ENCODE measurements at regions of chr2 and their contacts with region 1.

Region 1: DNA sequence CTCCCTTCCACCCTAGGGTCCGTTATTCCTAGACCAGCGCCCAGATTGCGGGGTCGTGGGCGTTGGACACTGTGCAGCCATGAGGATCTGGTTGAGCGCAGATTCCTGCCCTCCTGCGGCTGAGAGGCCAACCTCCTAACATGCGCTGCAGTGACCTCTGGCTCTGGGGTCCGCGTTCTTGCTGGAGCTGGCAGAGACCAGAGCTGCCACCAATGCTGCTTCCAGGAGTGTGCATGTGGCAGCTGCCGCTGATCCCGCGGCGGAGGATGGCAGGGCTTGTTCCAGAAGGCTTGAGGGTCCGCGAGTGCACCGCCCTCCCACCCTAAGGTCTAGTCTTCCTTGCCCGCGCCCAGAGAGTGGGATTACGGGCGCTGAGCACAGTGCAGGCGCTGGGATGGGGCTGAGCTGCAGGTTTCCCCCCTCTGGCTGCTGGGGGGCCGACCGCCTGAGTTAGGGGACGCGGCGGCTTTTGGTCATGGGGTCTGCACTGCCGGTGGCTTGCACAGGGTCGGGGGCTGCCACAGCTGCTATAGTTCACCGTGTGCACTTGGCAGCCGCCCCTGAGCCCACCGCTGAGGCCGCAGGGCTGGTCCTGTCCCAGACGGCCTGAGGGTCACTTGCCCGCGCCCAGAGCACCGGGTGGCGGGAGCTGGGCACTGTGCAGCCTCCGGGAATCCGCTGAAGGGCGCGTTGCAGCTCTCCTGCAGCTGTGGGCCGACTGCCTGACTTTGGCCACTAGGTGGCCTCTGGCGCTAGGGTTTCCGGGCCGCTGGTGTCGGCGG is 145.9 kb downstream of the CCDC74A start:
- DNase-seq: peak; percentile 68 to 87
- H3K4me3 ChIP-seq: peak overlapping the region; percentile 23 to 44
- H3K27ac ChIP-seq: no peak overlapping the region
- H3K4me1 ChIP-seq: peaks cover 11 to 24% (median 20%) of the 10 kb centered on the region in 4 donors
- H3K27me3 ChIP-seq: no peaks in the 10 kb centered on the region
- CTCF ChIP-seq: peak; percentile 83 to 90

Region 2: DNA sequence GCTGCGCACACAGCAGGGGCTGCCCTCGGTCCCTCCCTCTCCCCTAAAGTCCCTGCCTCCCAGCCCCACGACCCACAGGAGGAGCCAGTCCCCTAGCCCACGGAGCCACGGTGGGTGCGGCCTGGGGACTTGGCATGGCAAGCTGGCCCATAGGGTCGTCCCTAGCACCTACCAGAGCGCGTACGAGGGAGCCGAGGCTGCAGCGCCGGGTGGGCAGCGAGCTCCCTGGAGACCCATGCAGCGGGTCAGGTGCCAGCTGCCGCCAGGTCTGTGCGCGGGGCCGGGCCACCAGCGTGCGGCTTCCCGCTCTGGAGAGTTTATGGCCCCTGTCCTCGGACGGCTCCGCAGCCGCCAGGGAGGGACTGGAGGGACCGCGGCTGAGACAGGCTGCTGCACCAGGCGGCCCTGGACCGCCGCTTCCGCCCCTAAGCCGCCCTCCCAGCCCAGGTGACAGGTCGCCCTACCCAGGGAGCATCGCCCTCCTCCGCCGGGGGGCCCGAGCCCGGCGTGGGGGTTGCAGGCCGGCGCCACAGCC is 127.7 kb after region 1 on chr2:
- intact Hi-C with region 1: loop called (anchors 2 kb)
- DNase-seq: no peak
- H3K4me3 ChIP-seq: peak overlapping the region in 1 of 2 donors; percentile 38
- H3K27ac ChIP-seq: no peak overlapping the region
- H3K4me1 ChIP-seq: peaks cover 0 to 14% (median 13%) of the 10 kb centered on the region in 4 donors
- H3K27me3 ChIP-seq: peaks cover 0 to 7% of the 10 kb centered on the region in 2 donors
- CTCF ChIP-seq: no peak